Activated T-helper 1 cell treated with anti-CD3 and anti-CD28 coated beads, Interleukin-12 subunit alpha, Interleukin-12 subunit beta, Interleukin-2, Interleukin-4 antibody, amounts not matched to agents 30 ng/mL and 10 ng/mL and 1 ng/mL, durations not matched to agents 14 hours and 24 hours and 36 hours (primary cell): ENCODE measurements at regions of chr12 and their contacts with region 1.

Region 1: GRCh38 chr12:68279227-68280054 is 26.0 kb upstream of the IL22 start:
- DNase-seq: no peak
- H3K4me3 Mint-ChIP-seq: no peak overlapping the region
- H3K27ac Mint-ChIP-seq: peak overlapping the region; percentile 45
- H3K4me1 Mint-ChIP-seq: peaks cover 61% of the 10 kb centered on the region
- H3K27me3 Mint-ChIP-seq: no peaks in the 10 kb centered on the region

Region 2: GRCh38 chr12:67996347-67996746 is 283.1 kb before region 1 on chr12:
- intact Hi-C with region 1: loop called (anchors 5 kb)
- DNase-seq: no peak
- H3K4me3 Mint-ChIP-seq: no peak overlapping the region
- H3K27ac Mint-ChIP-seq: peak overlapping the region; percentile 1
- H3K4me1 Mint-ChIP-seq: peaks cover 69% of the 10 kb centered on the region
- H3K27me3 Mint-ChIP-seq: no peaks in the 10 kb centered on the region

Region 3: DNA sequence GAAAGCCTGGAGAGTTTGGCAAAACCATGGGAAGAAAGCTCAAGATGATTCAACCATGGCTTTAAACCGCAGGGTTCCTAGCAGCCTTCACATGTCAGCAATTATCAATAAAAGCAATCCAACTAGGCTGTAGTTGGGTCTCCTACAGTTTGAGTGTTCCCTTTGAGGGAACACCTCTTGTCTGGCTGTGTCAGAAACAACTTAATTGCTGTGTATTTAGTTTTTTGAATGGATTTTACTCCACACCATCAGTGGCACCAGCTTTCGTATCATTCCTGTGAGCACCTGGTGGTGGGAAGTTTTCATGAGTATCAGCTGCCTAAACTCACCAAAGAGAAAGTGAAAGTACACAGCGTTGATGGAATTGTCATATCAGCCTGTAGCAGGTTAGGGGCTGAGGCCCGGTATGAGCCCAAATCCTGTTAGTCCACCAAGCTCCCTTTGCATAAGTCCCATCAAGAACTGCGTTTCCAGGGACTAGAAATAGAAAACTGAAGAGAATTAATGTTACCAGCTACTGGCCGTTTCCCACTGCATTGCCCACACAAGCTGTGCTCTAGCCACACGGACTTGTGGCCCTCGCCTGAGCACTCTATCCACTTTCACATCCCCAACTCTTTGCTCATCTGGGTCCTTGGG is 42.9 kb before region 1 on chr12:
- intact Hi-C with region 1: loop called (anchors 1 kb)
- DNase-seq: peak; percentile 39
- H3K4me3 Mint-ChIP-seq: peak overlapping the region; percentile 84
- H3K27ac Mint-ChIP-seq: peak overlapping the region; percentile 93
- H3K4me1 Mint-ChIP-seq: peaks cover 94% of the 10 kb centered on the region
- H3K27me3 Mint-ChIP-seq: no peaks in the 10 kb centered on the region

Region 4: GRCh38 chr12:68267892-68268396 is 11.5 kb before region 1 on chr12:
- intact Hi-C with region 1: loop called (anchors 1 kb)
- DNase-seq: peak; percentile 24
- H3K4me3 Mint-ChIP-seq: peak overlapping the region; percentile 51
- H3K27ac Mint-ChIP-seq: peak overlapping the region; percentile 84
- H3K4me1 Mint-ChIP-seq: peaks cover 71% of the 10 kb centered on the region
- H3K27me3 Mint-ChIP-seq: peaks cover 4% of the 10 kb centered on the region

Region 5: GRCh38 chr12:68303850-68304249 is 24.4 kb after region 1 on chr12:
- intact Hi-C with region 1: loop called (anchors 1 kb)
- DNase-seq: no peak
- H3K4me3 Mint-ChIP-seq: no peak overlapping the region
- H3K27ac Mint-ChIP-seq: no peak overlapping the region
- H3K4me1 Mint-ChIP-seq: peaks cover 59% of the 10 kb centered on the region
- H3K27me3 Mint-ChIP-seq: no peaks in the 10 kb centered on the region

Region 6: DNA sequence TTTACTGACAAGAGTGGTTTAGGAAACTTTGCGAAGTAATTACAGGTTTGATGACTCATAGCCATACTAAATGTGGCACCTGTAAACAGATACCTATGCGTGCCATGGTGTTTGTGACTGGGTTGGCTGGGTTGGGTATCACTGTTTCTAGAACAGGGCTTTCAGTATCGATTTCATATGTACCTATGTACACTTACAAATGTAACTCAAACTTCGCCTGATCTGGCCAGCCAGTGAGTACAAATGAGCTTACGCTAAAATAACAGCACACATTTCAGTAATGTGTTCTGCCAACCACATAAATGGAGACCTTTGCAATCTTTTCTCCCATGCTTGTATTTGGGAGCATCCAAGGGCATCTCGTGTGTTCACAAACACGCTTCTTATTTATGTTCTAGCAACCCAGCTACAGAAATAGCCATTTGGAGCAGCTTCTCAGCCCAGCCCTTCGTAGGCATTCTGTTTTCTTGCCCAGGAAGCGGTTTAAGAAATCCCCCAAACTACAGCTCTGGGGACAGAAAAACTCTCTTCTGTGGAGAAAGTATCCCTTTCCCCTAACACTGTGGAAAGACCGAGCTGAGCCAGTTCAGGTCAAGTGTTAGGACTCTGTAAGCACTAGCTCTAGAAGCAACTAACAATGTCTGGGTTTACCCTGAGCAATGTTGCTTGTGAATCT is 95.0 kb after region 1 on chr12:
- intact Hi-C with region 1: loop called (anchors 5 kb)
- DNase-seq: peak; percentile 60
- H3K4me3 Mint-ChIP-seq: peak overlapping the region; percentile 31
- H3K27ac Mint-ChIP-seq: peak overlapping the region; percentile 93
- H3K4me1 Mint-ChIP-seq: peaks cover 68% of the 10 kb centered on the region
- H3K27me3 Mint-ChIP-seq: no peaks in the 10 kb centered on the region

Region 7: DNA sequence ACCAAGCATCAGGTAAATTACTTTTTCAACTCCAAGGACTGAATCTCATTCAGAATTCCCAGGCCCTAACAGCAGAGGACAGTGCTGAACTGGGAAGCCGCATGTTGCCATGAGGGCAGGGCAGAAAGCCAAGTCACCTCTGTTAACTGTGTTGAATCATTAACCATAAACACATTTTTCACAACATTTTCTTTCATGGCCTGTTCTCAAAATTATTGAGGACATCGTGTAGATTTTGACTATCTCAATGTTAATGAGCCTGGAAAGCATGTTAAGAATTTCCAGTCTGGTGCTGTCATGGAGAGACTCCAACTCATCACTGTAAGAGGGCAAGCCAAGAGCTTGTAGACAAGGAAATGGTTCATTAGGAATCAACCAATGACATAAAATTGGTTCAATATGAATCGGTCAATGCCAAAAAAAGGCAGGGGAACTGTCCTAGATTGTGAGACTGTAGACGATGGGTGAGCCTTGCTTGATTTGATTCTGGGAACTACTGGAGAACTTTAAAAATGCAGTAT is 619.9 kb after region 1 on chr12:
- intact Hi-C with region 1: no loop called
- DNase-seq: no peak
- H3K4me3 Mint-ChIP-seq: no peak overlapping the region
- H3K27ac Mint-ChIP-seq: no peak overlapping the region
- H3K4me1 Mint-ChIP-seq: peaks cover under 1% of the 10 kb centered on the region
- H3K27me3 Mint-ChIP-seq: peaks cover 2% of the 10 kb centered on the region